ENCODE measurements at regions of chrX and their contacts with region 1.

Region 1: DNA sequence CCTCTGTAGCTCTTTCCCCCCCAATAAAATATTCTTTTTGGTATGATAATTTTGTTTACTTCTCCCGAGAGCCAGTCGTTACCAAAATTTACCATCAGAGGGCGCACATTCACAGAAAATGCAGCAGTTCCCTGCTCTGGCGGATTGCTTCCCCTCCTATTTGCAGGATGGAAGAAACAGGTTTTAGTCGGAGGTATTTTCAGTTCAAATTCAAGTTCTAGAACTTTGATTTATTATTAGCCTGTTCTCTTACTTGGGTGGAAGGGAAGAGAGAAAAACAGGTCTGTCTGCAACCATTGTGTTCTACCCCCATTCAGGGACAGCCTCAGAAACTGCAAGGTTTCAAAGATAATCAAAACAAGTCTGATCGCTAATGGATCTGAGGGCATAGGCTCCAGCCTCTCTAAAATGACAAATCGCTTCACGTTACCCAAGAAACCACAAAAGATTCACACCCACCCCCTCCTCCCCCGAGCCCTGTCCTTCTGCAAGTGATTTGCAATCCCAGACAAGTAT is 263.8 kb upstream of the RPS6KA3 start:
- DNase-seq: peak; percentile 69
- H3K4me3 Mint-ChIP-seq: no peak overlapping the region
- H3K27ac Mint-ChIP-seq: no peak overlapping the region
- H3K4me1 Mint-ChIP-seq: peaks cover 2% of the 10 kb centered on the region
- H3K27me3 Mint-ChIP-seq: peaks cover 14% of the 10 kb centered on the region

Region 2: DNA sequence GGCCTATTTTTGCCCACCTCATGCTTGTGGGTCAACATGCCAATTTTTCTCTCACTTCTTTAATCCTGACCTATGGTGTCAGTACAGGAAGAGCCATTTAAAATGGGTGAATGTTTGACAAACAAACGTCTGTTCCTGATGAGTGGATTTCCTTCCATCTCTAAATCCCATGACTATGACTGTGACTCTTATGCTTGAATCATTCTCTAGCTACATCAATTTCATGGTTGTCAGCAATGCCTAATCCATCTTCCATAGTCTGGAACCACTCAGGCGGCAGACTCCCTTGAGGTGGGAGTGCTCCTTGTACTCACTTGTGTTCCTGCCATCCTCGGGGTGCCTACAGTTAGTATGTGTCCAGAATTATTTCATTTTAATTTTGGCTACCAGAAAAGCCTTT is 68.9 kb before region 1 on chrX:
- CTCF ChIA-PET with region 1: no interaction called
- intact Hi-C with region 1: no loop called
- DNase-seq: no peak
- H3K4me3 Mint-ChIP-seq: no peak overlapping the region
- H3K27ac Mint-ChIP-seq: no peak overlapping the region
- H3K4me1 Mint-ChIP-seq: peaks cover 25% of the 10 kb centered on the region
- H3K27me3 Mint-ChIP-seq: no peaks in the 10 kb centered on the region

Region 3: DNA sequence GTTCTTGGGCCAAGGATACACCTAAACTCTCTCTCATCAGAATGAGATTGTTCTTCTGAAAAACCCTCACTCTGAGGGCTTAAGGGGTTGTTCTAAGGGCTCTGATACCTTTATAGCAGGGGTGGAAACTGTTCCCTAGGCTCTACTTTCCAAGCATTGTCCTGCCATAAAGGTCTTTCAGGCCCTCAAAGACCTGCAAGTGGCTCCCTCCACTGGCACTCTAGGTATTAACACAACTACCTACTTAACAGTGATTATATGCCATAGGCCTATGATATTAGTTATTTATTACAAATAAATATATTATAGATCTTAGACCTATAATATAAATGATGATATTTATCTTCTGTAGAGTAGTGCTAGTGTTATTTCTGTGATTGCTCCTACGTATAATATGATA is 210.0 kb after region 1 on chrX:
- CTCF ChIA-PET with region 1: no interaction called
- intact Hi-C with region 1: loop called (anchors 2 kb)
- DNase-seq: no peak
- H3K4me3 Mint-ChIP-seq: no peak overlapping the region
- H3K27ac Mint-ChIP-seq: no peak overlapping the region
- H3K4me1 Mint-ChIP-seq: no peaks in the 10 kb centered on the region
- H3K27me3 Mint-ChIP-seq: peaks cover 7% of the 10 kb centered on the region

Region 4: GRCh38 chrX:21479695-21480270 is 949.3 kb after region 1 on chrX:
- CTCF ChIA-PET with region 1: interaction called, 8 read pairs
- intact Hi-C with region 1: loop called (anchors 1 kb)
- DNase-seq: no peak
- H3K4me3 Mint-ChIP-seq: no peak overlapping the region
- H3K27ac Mint-ChIP-seq: no peak overlapping the region
- H3K4me1 Mint-ChIP-seq: peaks cover 3% of the 10 kb centered on the region
- H3K27me3 Mint-ChIP-seq: no peaks in the 10 kb centered on the region

Region 5: GRCh38 chrX:21745756-21746155 is 1215.3 kb after region 1 on chrX:
- CTCF ChIA-PET with region 1: no interaction called
- intact Hi-C with region 1: loop called (anchors 2 kb)
- DNase-seq: peak; percentile 64
- H3K4me3 Mint-ChIP-seq: no peak overlapping the region
- H3K27ac Mint-ChIP-seq: no peak overlapping the region
- H3K4me1 Mint-ChIP-seq: no peaks in the 10 kb centered on the region
- H3K27me3 Mint-ChIP-seq: no peaks in the 10 kb centered on the region